Dendritic cell treated with granulocyte-macrophage colony-stimulating factor and Interleukin-4, amounts not matched to agents 40 ng/mL and 50 ng/mL, for 4 days (primary cell): ENCODE measurements at regions of chr17 and their contacts with region 1.

Region 1: GRCh38 chr17:54969658-54970572 is 1.4 kb downstream of the STXBP4 start:
- H3K4me3 Mint-ChIP-seq: no peak overlapping the region
- H3K27ac Mint-ChIP-seq: no peak overlapping the region
- H3K4me1 Mint-ChIP-seq: peaks cover 13% of the 10 kb centered on the region
- H3K27me3 Mint-ChIP-seq: no peaks in the 10 kb centered on the region

Region 2: GRCh38 chr17:54982399-54982798 is 12.5 kb after region 1 on chr17:
- intact Hi-C with region 1: no loop called
- H3K4me3 Mint-ChIP-seq: no peak overlapping the region
- H3K27ac Mint-ChIP-seq: no peak overlapping the region
- H3K4me1 Mint-ChIP-seq: no peaks in the 10 kb centered on the region
- H3K27me3 Mint-ChIP-seq: no peaks in the 10 kb centered on the region

Region 3: DNA sequence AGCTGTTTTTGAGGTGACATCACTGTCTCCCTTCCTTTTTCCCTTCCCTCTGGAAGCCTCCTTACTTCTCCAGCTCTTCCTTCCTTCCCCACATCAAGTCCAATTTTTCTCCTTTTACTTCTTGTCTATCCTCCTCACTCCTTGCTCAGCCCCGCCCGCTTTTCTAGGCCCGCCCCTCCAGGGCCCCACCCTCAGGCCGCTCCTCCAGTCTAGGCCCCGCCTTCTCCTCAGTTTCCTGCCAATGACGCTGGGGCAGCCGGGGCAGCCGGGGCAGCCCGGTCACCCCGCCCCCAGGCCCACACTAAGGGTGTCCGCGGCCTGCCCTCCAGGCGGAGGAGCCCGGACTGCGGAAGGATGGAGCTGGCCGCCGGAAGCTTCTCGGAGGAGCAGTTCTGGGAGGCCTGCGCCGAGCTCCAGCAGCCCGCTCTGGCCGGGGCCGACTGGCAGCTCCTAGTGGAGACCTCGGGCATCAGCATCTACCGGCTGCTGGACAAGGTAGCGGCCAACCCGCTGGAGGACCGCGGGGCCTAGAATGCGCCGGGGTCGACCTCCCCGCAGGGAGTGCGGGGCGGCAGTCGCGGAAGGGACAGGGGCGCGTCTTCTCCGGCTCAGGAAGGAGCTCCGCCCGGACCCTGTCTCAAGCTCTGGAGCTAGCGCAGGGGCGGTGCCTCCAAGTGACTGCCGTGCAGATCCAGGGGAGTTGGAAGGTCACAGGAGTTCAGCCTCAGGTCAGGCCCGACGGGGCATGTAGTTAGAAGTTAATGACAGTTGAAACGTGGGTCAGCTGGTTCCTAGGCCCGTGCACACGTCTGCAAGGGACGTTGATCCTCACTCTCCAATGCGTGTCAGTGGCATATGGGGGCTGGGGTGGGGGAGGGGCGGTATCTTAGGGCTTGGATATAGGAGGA is 781.1 kb after region 1 on chr17 and contains the start of gene PCTP:
- intact Hi-C with region 1: loop called (anchors 10 kb)
- H3K4me3 Mint-ChIP-seq: peak within 1 kb of the TSS; percentile 85
- H3K27ac Mint-ChIP-seq: peak within 1 kb of the TSS; percentile 85
- H3K4me1 Mint-ChIP-seq: peaks cover 23% of the 10 kb centered on the region
- H3K27me3 Mint-ChIP-seq: no peaks in the 10 kb centered on the region